GM12878 (cell line): ENCODE measurements at regions of chr12 and their contacts with region 1.

Region 1: GRCh38 chr12:24852420-24852819 is 96.5 kb downstream of the BCAT1 start:
- DNase-seq: no peak
- ATAC-seq: no peak; the same call in 2 of the 3 replicates
- H3K4me3 ChIP-seq: no peak overlapping the region
- H3K27ac ChIP-seq: no peak overlapping the region
- H3K4me1 ChIP-seq: no peaks in the 10 kb centered on the region
- H3K27me3 ChIP-seq: no peaks in the 10 kb centered on the region
- CTCF ChIP-seq: peak in 2 of 3 experiments; percentile 14 to 28; a peak in 2 of 6 replicates
- EP300 ChIP-seq: no peak
- POLR2A ChIP-seq: no peak
- RAD21 ChIP-seq: peak; percentile 46

Region 2: DNA sequence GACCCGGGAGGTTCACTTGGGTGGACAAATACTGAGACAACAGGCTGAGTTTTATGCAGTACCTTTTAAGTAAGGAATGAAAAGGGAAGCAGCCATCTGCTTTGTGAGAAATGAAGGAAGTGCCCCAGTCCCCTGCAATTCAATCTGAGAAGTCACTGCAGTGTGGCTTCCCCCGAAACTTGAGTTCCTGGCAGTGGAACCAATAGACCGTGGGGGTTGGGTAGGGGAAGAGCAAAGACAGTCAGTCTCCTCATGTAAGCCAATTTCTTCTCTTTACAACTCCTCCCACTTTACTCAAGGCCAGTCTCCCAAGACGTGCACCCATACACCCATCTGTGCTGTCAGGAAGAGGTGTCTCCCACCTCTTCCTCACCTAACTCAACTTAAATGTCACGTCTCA is 110.0 kb before region 1 on chr12:
- CTCF ChIA-PET with region 1: no interaction called
- POLR2A ChIA-PET with region 1: no interaction called
- RAD21 ChIA-PET with region 1: no interaction called
- SMC1A ChIA-PET with region 1: no interaction called
- in situ Hi-C with region 1: no loop called
- intact Hi-C with region 1: no loop called
- DNase-seq: peak; percentile 45
- ATAC-seq: peak; percentile 83
- H3K4me3 ChIP-seq: no peak overlapping the region
- H3K27ac ChIP-seq: no peak overlapping the region
- H3K4me1 ChIP-seq: peaks cover 22% of the 10 kb centered on the region
- H3K27me3 ChIP-seq: no peaks in the 10 kb centered on the region; a peak in 1 of 4 replicates
- CTCF ChIP-seq: no peak
- EP300 ChIP-seq: no peak
- POLR2A ChIP-seq: no peak
- RAD21 ChIP-seq: no peak

Region 3: DNA sequence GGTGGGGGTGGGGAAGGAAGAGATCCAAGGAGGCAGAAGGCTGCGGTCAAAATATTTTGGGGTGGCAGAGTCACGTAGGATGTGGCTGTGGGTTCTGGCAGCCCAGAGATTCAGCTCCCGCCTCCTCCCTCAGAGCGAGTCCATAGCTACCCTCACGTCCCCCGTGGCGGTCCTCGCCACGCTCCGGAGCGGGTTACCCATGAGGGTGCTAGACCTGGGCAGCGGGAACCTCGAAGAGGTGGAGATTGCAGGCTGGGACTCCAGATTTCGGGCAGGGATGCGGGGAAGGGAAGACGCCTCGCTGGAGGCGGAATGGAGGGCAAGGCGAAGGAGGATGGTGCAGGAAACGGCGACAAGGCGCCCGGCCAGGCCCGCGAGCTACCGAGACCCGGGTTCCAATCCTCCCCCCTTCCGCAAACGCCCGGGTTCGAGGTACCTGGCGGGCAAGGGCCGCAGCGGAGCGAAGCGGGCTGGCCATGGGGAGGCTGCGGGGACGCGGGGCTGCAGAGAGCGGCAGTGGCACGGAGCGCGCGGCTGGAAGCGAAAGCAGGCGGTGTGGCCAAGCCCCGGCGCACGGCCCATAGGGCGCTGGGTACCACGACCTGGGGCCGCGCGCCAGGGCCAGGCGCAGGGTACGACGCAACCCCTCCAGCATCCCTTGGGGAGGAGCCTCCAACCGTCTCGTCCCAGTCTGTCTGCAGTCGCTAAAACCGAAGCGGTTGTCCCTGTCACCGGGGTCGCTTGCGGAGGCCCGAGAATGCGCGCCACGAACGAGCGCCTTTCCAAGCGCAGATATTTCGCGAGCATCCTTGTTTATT is 50.3 kb after region 1 on chr12:
- CTCF ChIA-PET with region 1: interaction called, 3 read pairs
- POLR2A ChIA-PET with region 1: interaction called, 4 read pairs
- RAD21 ChIA-PET with region 1: interaction called, 3 read pairs
- SMC1A ChIA-PET with region 1: interaction called, 6 read pairs
- in situ Hi-C with region 1: no loop called
- intact Hi-C with region 1: loop called (anchors 2 kb)
- DNase-seq: no peak
- ATAC-seq: peak; percentile 74
- H3K4me3 ChIP-seq: peak overlapping the region; percentile 89
- H3K27ac ChIP-seq: peak overlapping the region; percentile 48; the same call in 1 of the 2 replicates
- H3K4me1 ChIP-seq: peaks cover 20% of the 10 kb centered on the region
- H3K27me3 ChIP-seq: no peaks in the 10 kb centered on the region
- CTCF ChIP-seq: no peak
- EP300 ChIP-seq: no peak
- POLR2A ChIP-seq: peak; percentile 39; the same call in 1 of the 2 replicates
- RAD21 ChIP-seq: no peak

Region 4: DNA sequence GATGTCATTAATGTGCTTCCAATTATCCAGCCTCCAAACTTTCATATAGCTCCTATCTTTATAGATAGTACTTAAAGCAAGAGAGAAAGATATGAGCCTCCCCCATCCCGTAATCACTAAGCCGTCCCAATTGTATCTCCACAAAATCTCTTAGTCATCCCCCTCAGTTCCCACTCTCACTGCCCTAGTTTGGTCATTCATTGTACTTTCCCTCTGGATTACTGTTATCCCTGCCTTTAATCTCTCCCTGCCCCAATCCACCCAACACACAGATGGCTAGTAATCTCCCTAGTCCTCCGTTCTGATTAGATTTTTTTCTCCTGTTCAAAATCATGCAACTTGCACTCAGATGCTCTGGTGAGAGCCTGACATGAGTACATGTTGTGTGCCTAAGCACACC is 101.8 kb after region 1 on chr12:
- CTCF ChIA-PET with region 1: interaction called, 21 read pairs
- POLR2A ChIA-PET with region 1: interaction called, 3 read pairs
- RAD21 ChIA-PET with region 1: interaction called, 4 read pairs
- SMC1A ChIA-PET with region 1: interaction called, 41 read pairs
- in situ Hi-C with region 1: no loop called
- intact Hi-C with region 1: no loop called
- DNase-seq: no peak
- ATAC-seq: no peak
- H3K4me3 ChIP-seq: no peak overlapping the region
- H3K27ac ChIP-seq: peak overlapping the region; percentile 64
- H3K4me1 ChIP-seq: peaks cover 49% of the 10 kb centered on the region
- H3K27me3 ChIP-seq: no peaks in the 10 kb centered on the region
- CTCF ChIP-seq: no peak
- EP300 ChIP-seq: no peak
- POLR2A ChIP-seq: no peak
- RAD21 ChIP-seq: no peak